CD4-positive, alpha-beta T cell (primary cell): ENCODE measurements at regions of chr10 and their contacts with region 1.

Region 1: DNA sequence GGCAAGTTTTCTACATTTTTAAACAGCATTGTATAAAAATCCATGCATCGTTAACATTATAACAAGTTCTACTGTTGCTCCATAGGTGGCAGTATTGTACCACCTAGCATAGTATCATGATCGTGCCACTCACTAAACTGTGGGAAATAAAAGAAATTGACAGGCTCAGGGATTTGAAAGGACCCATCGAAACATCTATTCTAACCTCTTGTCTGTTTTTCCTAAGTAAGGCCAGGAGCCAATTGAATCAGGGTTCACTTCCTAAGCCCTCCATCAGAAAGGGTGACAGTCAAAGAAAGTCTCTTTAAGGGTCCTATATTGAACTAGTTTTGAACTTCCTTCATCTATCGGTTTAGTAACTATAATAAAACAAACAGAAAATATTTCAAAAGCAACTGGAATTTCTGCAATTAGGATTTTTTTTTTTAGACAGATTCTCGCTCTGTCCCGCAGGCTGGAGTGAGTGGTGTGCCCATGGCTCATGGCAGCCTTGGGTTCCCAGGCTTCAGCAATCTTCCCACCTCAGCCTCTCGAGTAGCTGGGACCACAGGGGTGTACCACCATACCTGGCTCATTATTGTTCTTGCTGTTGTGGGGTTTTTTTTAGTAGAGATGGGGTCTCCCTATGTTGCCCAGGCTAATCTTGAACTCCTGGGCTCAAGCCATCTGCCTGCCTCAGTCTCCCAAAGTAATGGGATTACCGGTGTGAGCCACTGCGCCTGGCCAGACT is 9.4 kb downstream of the HACD1 start:
- DNase-seq: peak in 5 of 14 experiments; percentile 10 to 77 (median 68)
- ATAC-seq: peak; percentile 73
- H3K4me3 ChIP-seq: no peak overlapping the region
- H3K4me3 Mint-ChIP-seq: no peak overlapping the region
- H3K27ac ChIP-seq: no peak overlapping the region
- H3K27ac Mint-ChIP-seq: no peak overlapping the region
- H3K4me1 ChIP-seq: peaks cover 2% of the 10 kb centered on the region
- H3K4me1 Mint-ChIP-seq: no peaks in the 10 kb centered on the region
- H3K27me3 ChIP-seq: no peaks in the 10 kb centered on the region
- H3K27me3 Mint-ChIP-seq: no peaks in the 10 kb centered on the region
- CTCF ChIP-seq: peak; percentile 92

Region 2: DNA sequence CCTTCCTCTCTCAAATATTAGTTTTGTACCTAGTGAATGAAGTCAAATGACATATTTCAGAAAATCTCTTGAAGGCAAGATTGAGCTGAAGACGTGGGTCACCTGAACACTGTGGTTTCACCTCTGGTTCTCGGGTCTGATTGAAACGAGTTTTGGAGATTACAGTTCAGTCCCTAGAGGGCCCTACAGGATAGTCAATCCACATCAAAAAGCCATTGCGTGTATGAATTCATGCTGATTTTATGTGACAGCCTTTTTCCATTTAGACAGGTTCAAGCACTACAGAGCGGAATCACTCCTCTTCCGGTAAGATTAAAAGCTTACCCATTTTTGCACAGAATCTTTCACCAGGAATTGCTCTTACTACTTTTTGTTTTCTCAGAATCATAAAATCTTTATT is 317.5 kb before region 1 on chr10:
- CTCF ChIA-PET with region 1: no interaction called
- POLR2A ChIA-PET with region 1: no interaction called
- intact Hi-C with region 1: loop called (anchors 10 kb)
- DNase-seq: peak in 4 of 14 experiments; percentile 8 to 45 (median 35)
- ATAC-seq: peak; percentile 66
- H3K4me3 ChIP-seq: no peak overlapping the region
- H3K4me3 Mint-ChIP-seq: no peak overlapping the region
- H3K27ac ChIP-seq: no peak overlapping the region
- H3K27ac Mint-ChIP-seq: no peak overlapping the region
- H3K4me1 ChIP-seq: no peaks in the 10 kb centered on the region
- H3K4me1 Mint-ChIP-seq: peaks cover 6% of the 10 kb centered on the region
- H3K27me3 ChIP-seq: no peaks in the 10 kb centered on the region
- H3K27me3 Mint-ChIP-seq: peaks cover 29% of the 10 kb centered on the region
- CTCF ChIP-seq: peak; percentile 34

Region 3: DNA sequence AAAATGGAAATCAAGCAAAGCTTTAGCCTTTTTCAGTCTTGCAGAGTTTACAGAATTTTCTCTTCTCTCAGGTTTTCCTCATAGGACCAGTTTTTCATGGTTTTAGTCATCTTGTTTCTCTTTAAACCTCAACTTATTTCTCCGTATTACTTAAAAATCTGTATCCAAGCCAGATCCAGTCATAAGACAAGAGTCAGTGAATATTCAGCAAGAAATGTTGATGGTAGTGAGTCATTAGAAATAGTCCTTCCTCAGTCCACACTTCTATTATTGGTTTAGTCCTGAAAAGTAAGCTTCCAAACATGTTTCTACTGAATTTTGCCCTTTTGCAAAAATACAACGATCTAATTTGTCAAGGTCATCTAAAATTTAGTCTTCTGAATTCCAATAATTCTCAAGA is 272.7 kb before region 1 on chr10:
- CTCF ChIA-PET with region 1: no interaction called
- POLR2A ChIA-PET with region 1: no interaction called
- intact Hi-C with region 1: no loop called
- DNase-seq: no peak
- ATAC-seq: no peak
- H3K4me3 ChIP-seq: no peak overlapping the region
- H3K4me3 Mint-ChIP-seq: no peak overlapping the region
- H3K27ac ChIP-seq: no peak overlapping the region
- H3K27ac Mint-ChIP-seq: no peak overlapping the region
- H3K4me1 ChIP-seq: no peaks in the 10 kb centered on the region
- H3K4me1 Mint-ChIP-seq: no peaks in the 10 kb centered on the region
- H3K27me3 ChIP-seq: no peaks in the 10 kb centered on the region
- H3K27me3 Mint-ChIP-seq: peaks cover 12% of the 10 kb centered on the region
- CTCF ChIP-seq: no peak

Region 4: GRCh38 chr10:17742918-17743317 is 135.2 kb after region 1 on chr10:
- CTCF ChIA-PET with region 1: no interaction called
- POLR2A ChIA-PET with region 1: interaction called, 3 read pairs
- intact Hi-C with region 1: loop called (anchors 1 kb)
- DNase-seq: peak; percentile 50 to 78 (median 66)
- ATAC-seq: peak; percentile 44
- H3K4me3 ChIP-seq: no peak overlapping the region
- H3K4me3 Mint-ChIP-seq: no peak overlapping the region
- H3K27ac ChIP-seq: no peak overlapping the region
- H3K27ac Mint-ChIP-seq: no peak overlapping the region
- H3K4me1 ChIP-seq: no peaks in the 10 kb centered on the region
- H3K4me1 Mint-ChIP-seq: peaks cover 5% of the 10 kb centered on the region
- H3K27me3 ChIP-seq: no peaks in the 10 kb centered on the region
- H3K27me3 Mint-ChIP-seq: no peaks in the 10 kb centered on the region
- CTCF ChIP-seq: peak; percentile 89

Region 5: DNA sequence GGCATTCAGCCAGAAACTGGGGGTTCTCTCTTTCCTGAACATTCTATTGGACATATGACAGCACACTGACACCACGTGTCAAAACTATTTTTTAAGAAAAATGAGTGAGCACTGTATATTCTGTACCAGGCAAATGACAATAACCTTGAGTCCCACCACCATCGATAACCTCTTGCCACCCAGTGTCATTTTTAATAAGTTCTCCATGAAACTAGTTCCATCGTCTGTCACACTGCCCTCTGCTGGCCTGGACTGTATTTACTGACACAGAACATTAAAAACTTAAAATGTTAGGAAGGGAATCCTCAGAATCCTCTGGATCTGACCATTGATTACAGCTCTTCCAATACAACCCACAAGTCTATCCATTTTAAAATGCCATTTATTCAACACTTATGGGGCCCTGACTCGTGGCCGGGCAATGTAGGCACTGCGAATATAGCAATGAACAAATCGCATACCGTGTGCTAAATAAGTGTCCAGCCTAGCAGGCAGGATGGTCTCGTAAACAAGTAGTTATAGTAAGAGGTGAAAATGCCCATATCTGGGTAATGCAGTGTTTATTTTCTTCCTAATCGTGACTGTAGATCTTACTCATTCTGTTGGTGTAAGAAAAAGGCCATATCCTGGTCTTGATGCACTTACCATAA is 496.6 kb after region 1 on chr10:
- CTCF ChIA-PET with region 1: no interaction called
- POLR2A ChIA-PET with region 1: no interaction called
- intact Hi-C with region 1: loop called (anchors 1 to 2 kb)
- DNase-seq: peak in 11 of 14 experiments; percentile 5 to 44 (median 22)
- ATAC-seq: no peak
- H3K4me3 ChIP-seq: no peak overlapping the region
- H3K4me3 Mint-ChIP-seq: no peak overlapping the region
- H3K27ac ChIP-seq: no peak overlapping the region
- H3K27ac Mint-ChIP-seq: no peak overlapping the region
- H3K4me1 ChIP-seq: no peaks in the 10 kb centered on the region
- H3K4me1 Mint-ChIP-seq: no peaks in the 10 kb centered on the region
- H3K27me3 ChIP-seq: no peaks in the 10 kb centered on the region
- H3K27me3 Mint-ChIP-seq: peaks cover 3% of the 10 kb centered on the region
- CTCF ChIP-seq: peak; percentile 58

Region 6: DNA sequence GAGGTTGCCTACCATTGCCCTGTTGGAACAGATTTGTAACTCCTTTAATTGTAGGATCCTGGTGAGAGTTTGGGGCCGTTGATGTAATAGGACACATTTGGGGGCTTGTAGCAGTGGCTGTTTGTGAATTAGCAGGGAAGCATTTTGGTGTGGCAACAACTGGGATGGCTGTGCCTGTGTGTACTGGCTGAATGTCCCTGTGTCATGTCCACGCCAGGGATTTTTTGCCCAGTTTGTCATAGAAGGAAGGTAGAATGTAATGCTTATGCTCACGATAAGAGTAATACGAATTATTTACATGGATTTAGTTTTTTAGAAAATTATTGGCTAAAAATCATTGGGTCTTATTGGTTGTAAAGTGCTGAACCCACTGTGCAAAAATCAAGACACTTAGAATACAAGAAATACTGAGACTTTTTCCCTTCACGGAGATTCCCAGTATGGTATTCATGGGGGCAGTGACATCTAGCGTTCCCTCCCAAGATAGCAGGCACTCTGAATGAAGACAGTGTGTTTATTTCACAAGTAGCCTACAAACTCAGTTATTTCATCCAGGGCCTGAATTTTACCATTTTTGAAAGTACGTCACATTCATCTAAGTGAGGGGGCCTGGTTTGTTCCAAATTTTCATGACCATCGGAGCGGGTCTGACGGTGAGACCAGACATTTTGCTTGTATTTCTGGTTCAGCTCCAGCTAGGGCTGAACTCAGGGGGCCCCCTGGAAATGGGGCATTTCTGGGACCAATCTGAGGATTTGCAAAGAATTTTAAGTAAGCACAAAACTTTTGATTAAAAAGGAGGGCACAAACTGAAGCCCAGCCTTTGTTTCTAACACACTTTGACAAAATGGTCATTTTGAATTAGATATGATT is 607.2 kb after region 1 on chr10:
- CTCF ChIA-PET with region 1: no interaction called
- POLR2A ChIA-PET with region 1: no interaction called
- intact Hi-C with region 1: loop called in 1 of 2 experiments (anchors 5 kb)
- DNase-seq: peak in 3 of 14 experiments; percentile 11 to 33 (median 24)
- ATAC-seq: no peak
- H3K4me3 ChIP-seq: no peak overlapping the region
- H3K4me3 Mint-ChIP-seq: no peak overlapping the region
- H3K27ac ChIP-seq: no peak overlapping the region
- H3K27ac Mint-ChIP-seq: no peak overlapping the region
- H3K4me1 ChIP-seq: no peaks in the 10 kb centered on the region
- H3K4me1 Mint-ChIP-seq: no peaks in the 10 kb centered on the region
- H3K27me3 ChIP-seq: no peaks in the 10 kb centered on the region
- H3K27me3 Mint-ChIP-seq: peaks cover 6% of the 10 kb centered on the region
- CTCF ChIP-seq: peak; percentile 22

Region 7: GRCh38 chr10:18238870-18239485 is 631.2 kb after region 1 on chr10:
- CTCF ChIA-PET with region 1: no interaction called
- POLR2A ChIA-PET with region 1: no interaction called
- intact Hi-C with region 1: loop called in 1 of 2 experiments (anchors 5 kb)
- DNase-seq: peak in 2 of 14 experiments; percentile 20 to 24
- ATAC-seq: no peak
- H3K4me3 ChIP-seq: no peak overlapping the region
- H3K4me3 Mint-ChIP-seq: no peak overlapping the region
- H3K27ac ChIP-seq: no peak overlapping the region
- H3K27ac Mint-ChIP-seq: no peak overlapping the region
- H3K4me1 ChIP-seq: no peaks in the 10 kb centered on the region
- H3K4me1 Mint-ChIP-seq: no peaks in the 10 kb centered on the region
- H3K27me3 ChIP-seq: no peaks in the 10 kb centered on the region
- H3K27me3 Mint-ChIP-seq: peaks cover 10% of the 10 kb centered on the region
- CTCF ChIP-seq: peak; percentile 27